Mammary epithelial cell (primary cell): ENCODE measurements at regions of chr19 and their contacts with region 1.

Region 1: DNA sequence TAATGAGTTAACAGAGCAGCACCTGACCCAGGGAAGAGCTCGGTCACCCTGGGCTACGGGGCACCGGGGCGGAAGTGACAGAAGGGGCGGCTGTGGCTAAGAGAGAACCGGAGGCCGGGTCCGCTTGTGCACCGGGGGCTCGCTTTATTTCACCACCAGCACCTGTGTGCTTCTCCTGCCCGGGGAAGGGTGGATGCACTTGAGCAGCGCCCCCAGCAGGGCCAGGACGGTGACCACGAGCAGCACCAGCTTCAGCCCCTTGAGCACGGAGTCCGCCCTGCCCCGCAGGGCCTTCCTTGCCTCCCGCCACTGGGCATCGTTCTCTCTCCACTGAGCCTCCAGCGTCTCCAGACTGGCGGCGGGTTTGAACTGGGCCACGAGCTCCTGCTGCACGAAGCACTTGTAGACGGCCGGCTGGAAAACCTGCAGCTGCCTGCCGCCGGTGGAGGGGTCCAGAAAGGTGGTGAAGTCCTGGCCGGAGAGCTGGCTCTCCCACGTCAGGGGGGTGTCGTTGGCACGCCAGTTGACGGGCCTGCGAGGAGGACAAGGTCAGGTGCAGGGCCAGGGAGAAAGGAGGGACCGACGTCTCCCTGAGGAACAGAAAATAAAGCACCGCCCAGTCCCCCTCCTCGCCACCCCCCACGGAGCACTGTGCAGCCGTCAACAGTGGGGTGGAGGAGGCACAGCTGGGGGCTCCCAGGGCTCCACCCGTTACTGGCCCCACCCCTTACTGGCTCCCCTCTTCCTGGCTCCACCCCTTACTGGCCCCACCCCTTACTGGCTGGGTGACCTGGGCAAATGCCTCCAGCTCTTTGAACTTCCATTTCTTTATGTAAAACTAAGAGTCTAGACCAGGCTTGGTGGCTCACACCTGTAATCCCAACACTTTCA is 3.6 kb downstream of the FAM187B start:
- DNase-seq: no peak
- H3K4me3 ChIP-seq: no peak overlapping the region
- H3K27ac ChIP-seq: no peak overlapping the region
- H3K4me1 ChIP-seq: no peaks in the 10 kb centered on the region
- H3K27me3 ChIP-seq: no peaks in the 10 kb centered on the region
- CTCF ChIP-seq: no peak

Region 2: GRCh38 chr19:35195830-35196229 is 29.1 kb before region 1 on chr19:
- CTCF ChIA-PET with region 1: no interaction called
- dilution Hi-C with region 1: loop called (anchors 5 kb)
- in situ Hi-C with region 1: no loop called
- intact Hi-C with region 1: no loop called
- DNase-seq: no peak
- H3K4me3 ChIP-seq: no peak overlapping the region
- H3K27ac ChIP-seq: no peak overlapping the region
- H3K4me1 ChIP-seq: no peaks in the 10 kb centered on the region
- H3K27me3 ChIP-seq: peaks cover 3% of the 10 kb centered on the region
- CTCF ChIP-seq: no peak